ENCODE measurements at regions of chr15 and their contacts with region 1.

Region 1: GRCh38 chr15:64490598-64491259 is 30.4 kb downstream of the ZNF609 start:
- DNase-seq: no peak
- ATAC-seq: no peak
- H3K4me3 ChIP-seq: no peak overlapping the region
- H3K27ac ChIP-seq: no peak overlapping the region
- H3K4me1 ChIP-seq: no peaks in the 10 kb centered on the region; a peak in 1 of 5 replicates
- H3K27me3 ChIP-seq: no peaks in the 10 kb centered on the region
- CTCF ChIP-seq: no peak
- EP300 ChIP-seq: no peak
- POLR2A ChIP-seq: no peak
- RAD21 ChIP-seq: no peak

Region 2: DNA sequence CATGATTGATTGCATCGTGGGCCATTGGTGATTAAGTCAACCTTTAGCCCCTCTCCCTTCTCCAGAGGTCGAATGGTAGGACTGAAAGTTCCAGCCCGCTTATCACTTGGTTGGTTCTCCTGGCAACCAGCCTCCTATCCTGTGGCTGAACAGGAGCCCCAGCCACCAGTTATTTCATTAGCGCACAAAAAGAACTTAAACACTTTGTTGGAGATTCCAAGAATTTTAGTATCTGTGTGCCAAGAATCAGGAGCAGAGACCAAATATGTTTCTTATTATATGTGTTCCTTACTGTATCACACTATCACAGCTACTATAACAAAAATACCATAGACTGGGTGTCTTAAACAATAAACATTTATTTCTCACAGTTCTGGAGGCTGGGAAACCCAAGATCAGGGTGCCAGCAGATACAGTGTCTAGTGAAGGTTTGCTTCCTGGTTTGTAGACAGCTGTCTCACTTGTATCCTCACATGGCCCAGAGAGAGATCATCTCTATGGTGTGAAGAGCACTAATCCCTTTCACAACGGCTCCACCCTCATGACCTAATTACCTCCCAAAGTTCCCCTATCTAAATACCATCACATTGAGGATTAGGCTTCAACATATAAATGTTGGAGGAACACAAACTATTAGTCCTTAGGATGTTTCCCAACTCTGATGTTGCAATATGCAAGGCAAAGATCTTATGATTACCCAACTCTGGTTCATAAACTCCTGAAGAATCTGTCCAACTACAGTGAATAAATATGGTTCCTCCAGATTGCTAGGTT is 1243.9 kb before region 1 on chr15:
- CTCF ChIA-PET with region 1: no interaction called
- POLR2A ChIA-PET with region 1: no interaction called
- in situ Hi-C with region 1: no loop called
- intact Hi-C with region 1: no loop called
- DNase-seq: no peak
- ATAC-seq: no peak
- H3K4me3 ChIP-seq: no peak overlapping the region
- H3K27ac ChIP-seq: no peak overlapping the region
- H3K4me1 ChIP-seq: peaks cover 0 to 13% of the 10 kb centered on the region in 2 experiments; a peak in 2 of 5 replicates
- H3K27me3 ChIP-seq: no peaks in the 10 kb centered on the region
- CTCF ChIP-seq: no peak
- EP300 ChIP-seq: no peak
- POLR2A ChIP-seq: no peak
- RAD21 ChIP-seq: no peak

Region 3: GRCh38 chr15:64507293-64507802 is 16.6 kb after region 1 on chr15:
- CTCF ChIA-PET with region 1: no interaction called
- POLR2A ChIA-PET with region 1: interaction called, 16 read pairs
- in situ Hi-C with region 1: no loop called
- intact Hi-C with region 1: no loop called
- DNase-seq: peak; percentile 19 to 85 (median 50)
- ATAC-seq: peak; percentile 98
- H3K4me3 ChIP-seq: no peak overlapping the region
- H3K27ac ChIP-seq: peak overlapping the region; percentile 48; the same call in 1 of the 3 replicates
- H3K4me1 ChIP-seq: peaks cover 6 to 21% of the 10 kb centered on the region in 2 experiments; a peak in 3 of 5 replicates
- H3K27me3 ChIP-seq: no peaks in the 10 kb centered on the region
- CTCF ChIP-seq: no peak
- EP300 ChIP-seq: peak; percentile 8; the same call in 1 of the 2 replicates
- POLR2A ChIP-seq: no peak
- RAD21 ChIP-seq: peak in 1 of 2 experiments; percentile 38; a peak in 2 of 4 replicates

Measured in K562 (cell line).